Adrenal gland (tissue), 19 donors: ENCODE measurements at regions of chr2 and their contacts with region 1.

Region 1: DNA sequence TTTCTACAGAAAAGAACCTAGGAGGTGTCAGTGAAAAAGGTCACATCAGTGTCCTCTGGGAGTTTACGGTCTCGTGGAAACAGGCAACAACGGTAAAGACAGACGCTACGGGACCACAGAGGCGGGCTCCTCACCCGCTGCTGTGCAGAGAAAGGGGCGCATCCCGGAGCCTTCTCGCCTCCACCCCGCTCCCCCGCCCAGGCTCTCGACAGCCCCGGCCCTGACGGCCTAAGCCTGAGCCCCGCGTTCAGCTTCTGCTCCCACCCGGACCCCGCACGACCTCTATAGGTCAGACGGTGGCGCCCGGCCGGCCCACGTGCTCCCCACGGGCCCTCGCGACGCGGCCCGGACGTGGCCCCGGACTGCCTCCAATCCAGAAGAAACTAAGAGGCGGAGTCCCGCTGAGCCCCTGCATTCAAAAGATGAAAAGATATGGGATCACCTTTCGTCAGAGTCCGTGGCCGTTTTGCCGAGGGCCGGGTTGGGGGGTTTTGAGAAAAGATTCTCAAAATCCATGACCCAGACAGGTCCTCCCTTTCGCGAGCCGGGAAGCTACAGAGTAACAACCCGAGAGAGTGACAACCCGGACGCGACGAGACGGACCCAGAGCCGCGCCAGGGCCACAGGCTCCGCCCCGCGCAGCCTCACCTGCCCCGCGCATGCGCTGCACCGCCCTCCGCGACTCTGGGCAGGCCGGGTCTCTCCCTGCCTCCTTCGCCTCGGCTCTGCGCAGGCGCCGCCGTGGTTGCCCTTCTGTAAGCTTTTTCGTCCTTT is at the start of gene ZC3H8:
- DNase-seq: peak; percentile 93 to 97 (median 95)
- H3K4me3 ChIP-seq: peak within 1 kb of the TSS in 3 of 4 donors; percentile 64 to 68 (median 67)
- H3K27ac ChIP-seq: peak within 1 kb of the TSS; percentile 65 to 90 (median 73)
- H3K4me1 ChIP-seq: peaks cover 0 to 21% of the 10 kb centered on the region in 2 donors
- H3K27me3 ChIP-seq: no peaks in the 10 kb centered on the region
- CTCF ChIP-seq: peak in 1 of 6 experiments; percentile 2
- POLR2A ChIP-seq: peak; percentile 72 to 89
- total RNA-seq, gene ZC3H8: 0.85 to 16.5 (median 8.2) TPM

Region 2: GRCh38 chr2:111652038-111652437 is 602.6 kb before region 1 on chr2:
- intact Hi-C with region 1: no loop called
- DNase-seq: no peak
- H3K4me3 ChIP-seq: no peak overlapping the region
- H3K27ac ChIP-seq: no peak overlapping the region
- H3K4me1 ChIP-seq: no peaks in the 10 kb centered on the region
- H3K27me3 ChIP-seq: no peaks in the 10 kb centered on the region
- CTCF ChIP-seq: no peak
- POLR2A ChIP-seq: no peak

Region 3: GRCh38 chr2:112110966-112111365 is 143.7 kb before region 1 on chr2:
- intact Hi-C with region 1: no loop called
- DNase-seq: no peak
- H3K4me3 ChIP-seq: no peak overlapping the region
- H3K27ac ChIP-seq: no peak overlapping the region
- H3K4me1 ChIP-seq: no peaks in the 10 kb centered on the region
- H3K27me3 ChIP-seq: no peaks in the 10 kb centered on the region
- CTCF ChIP-seq: no peak
- POLR2A ChIP-seq: no peak

Region 4: GRCh38 chr2:112121682-112122254 is 132.9 kb before region 1 on chr2:
- intact Hi-C with region 1: loop called in 1 of 2 experiments (anchors 10 kb)
- DNase-seq: peak in 4 of 7 donors; percentile 29 to 57 (median 46)
- H3K4me3 ChIP-seq: no peak overlapping the region
- H3K27ac ChIP-seq: no peak overlapping the region
- H3K4me1 ChIP-seq: no peaks in the 10 kb centered on the region
- H3K27me3 ChIP-seq: no peaks in the 10 kb centered on the region
- CTCF ChIP-seq: peak; percentile 27 to 68 (median 56)
- POLR2A ChIP-seq: no peak

Region 5: DNA sequence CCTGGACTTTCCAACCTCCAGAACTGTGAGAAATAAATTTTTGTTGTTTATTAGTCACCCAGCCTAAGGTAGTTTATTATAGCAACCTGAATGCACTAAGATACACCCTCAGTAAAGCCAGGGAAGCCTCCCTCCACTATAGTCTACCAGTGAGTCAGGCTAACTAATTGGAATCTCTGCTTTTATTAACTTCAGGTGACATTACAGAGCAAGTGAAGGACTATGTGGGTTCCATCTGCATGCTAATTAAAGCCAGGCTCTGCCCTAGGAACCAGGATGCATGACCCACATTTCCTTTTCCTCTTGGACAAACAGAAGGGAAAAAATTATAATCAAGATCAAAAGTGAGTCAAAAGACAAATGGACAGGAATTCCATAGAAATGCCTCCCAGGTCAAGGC is 55.9 kb before region 1 on chr2:
- intact Hi-C with region 1: no loop called
- DNase-seq: no peak
- H3K4me3 ChIP-seq: no peak overlapping the region
- H3K27ac ChIP-seq: no peak overlapping the region
- H3K4me1 ChIP-seq: no peaks in the 10 kb centered on the region
- H3K27me3 ChIP-seq: no peaks in the 10 kb centered on the region
- CTCF ChIP-seq: no peak
- POLR2A ChIP-seq: no peak